Naive thymus-derived CD4-positive, alpha-beta T cell (primary cell): ENCODE measurements at regions of chr10 and their contacts with region 1.

Region 1: DNA sequence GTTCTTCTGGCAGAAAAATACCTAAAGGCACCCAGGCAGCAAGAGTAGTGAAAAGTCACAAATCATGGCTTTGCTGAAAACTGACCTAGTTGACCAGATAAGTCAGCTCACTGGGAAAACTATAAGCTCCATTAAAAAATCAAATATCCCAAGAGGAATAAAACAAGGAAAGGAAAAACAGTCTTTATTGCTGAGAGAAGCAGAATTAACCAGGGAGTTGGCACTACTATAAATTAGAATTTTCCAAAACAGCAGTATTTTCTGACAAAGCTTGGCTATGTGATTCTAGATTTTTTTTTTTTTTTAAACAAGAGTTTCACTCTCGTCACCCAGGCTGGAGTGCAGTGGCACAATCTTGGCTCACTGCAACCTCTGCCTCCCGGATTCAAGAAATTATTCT is 12.6 kb downstream of the CCDC172 start:
- DNase-seq: no peak
- ATAC-seq: no peak
- H3K4me3 ChIP-seq: no peak overlapping the region
- H3K4me3 Mint-ChIP-seq: no peak overlapping the region
- H3K27ac ChIP-seq: no peak overlapping the region
- H3K27ac Mint-ChIP-seq: no peak overlapping the region
- H3K4me1 ChIP-seq: no peaks in the 10 kb centered on the region
- H3K4me1 Mint-ChIP-seq: no peaks in the 10 kb centered on the region
- H3K27me3 ChIP-seq: no peaks in the 10 kb centered on the region
- H3K27me3 Mint-ChIP-seq: peaks cover 0 to 7% (median 0%) of the 10 kb centered on the region in 5 donors

Region 2: GRCh38 chr10:116352125-116352524 is 15.3 kb after region 1 on chr10:
- CTCF ChIA-PET with region 1: no interaction called
- POLR2A ChIA-PET with region 1: interaction called, 11 read pairs
- intact Hi-C with region 1: no loop called
- DNase-seq: no peak
- ATAC-seq: no peak
- H3K4me3 ChIP-seq: no peak overlapping the region
- H3K4me3 Mint-ChIP-seq: no peak overlapping the region
- H3K27ac ChIP-seq: no peak overlapping the region
- H3K27ac Mint-ChIP-seq: no peak overlapping the region
- H3K4me1 ChIP-seq: no peaks in the 10 kb centered on the region
- H3K4me1 Mint-ChIP-seq: no peaks in the 10 kb centered on the region
- H3K27me3 ChIP-seq: no peaks in the 10 kb centered on the region
- H3K27me3 Mint-ChIP-seq: peaks cover 0 to 7% (median 0%) of the 10 kb centered on the region in 5 donors

Region 3: GRCh38 chr10:116457488-116457887 is 120.6 kb after region 1 on chr10:
- CTCF ChIA-PET with region 1: no interaction called
- POLR2A ChIA-PET with region 1: no interaction called
- intact Hi-C with region 1: no loop called
- DNase-seq: no peak
- ATAC-seq: no peak
- H3K4me3 ChIP-seq: no peak overlapping the region
- H3K4me3 Mint-ChIP-seq: no peak overlapping the region
- H3K27ac ChIP-seq: no peak overlapping the region
- H3K27ac Mint-ChIP-seq: no peak overlapping the region
- H3K4me1 ChIP-seq: no peaks in the 10 kb centered on the region
- H3K4me1 Mint-ChIP-seq: no peaks in the 10 kb centered on the region
- H3K27me3 ChIP-seq: no peaks in the 10 kb centered on the region
- H3K27me3 Mint-ChIP-seq: peaks cover 0 to 16% (median 5%) of the 10 kb centered on the region in 5 donors

Region 4: DNA sequence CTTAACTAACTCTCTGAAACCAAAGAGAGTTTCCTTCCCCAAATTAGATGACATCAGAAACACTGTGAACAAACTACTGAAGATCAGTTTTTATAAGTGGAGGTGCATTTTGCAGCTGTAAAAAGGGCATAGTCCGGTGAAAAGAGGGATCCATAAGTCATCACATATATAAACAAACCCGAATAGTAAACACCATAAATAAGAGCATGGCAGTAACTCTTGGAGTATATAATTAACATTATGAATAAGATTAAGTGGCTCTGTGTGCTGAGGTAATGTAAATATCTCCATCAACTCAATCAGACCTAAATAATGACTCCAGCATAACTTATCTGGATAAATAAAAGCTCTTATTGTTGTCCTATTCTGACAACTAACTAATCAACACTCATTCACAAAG is 711.1 kb after region 1 on chr10:
- CTCF ChIA-PET with region 1: no interaction called
- POLR2A ChIA-PET with region 1: no interaction called
- intact Hi-C with region 1: no loop called
- DNase-seq: no peak
- ATAC-seq: no peak
- H3K4me3 ChIP-seq: no peak overlapping the region
- H3K4me3 Mint-ChIP-seq: no peak overlapping the region
- H3K27ac ChIP-seq: no peak overlapping the region
- H3K27ac Mint-ChIP-seq: no peak overlapping the region
- H3K4me1 ChIP-seq: no peaks in the 10 kb centered on the region
- H3K4me1 Mint-ChIP-seq: no peaks in the 10 kb centered on the region
- H3K27me3 ChIP-seq: no peaks in the 10 kb centered on the region
- H3K27me3 Mint-ChIP-seq: peaks cover 0 to 16% (median 4%) of the 10 kb centered on the region in 5 donors